GM12878 (cell line): ENCODE measurements at regions of chr5 and their contacts with region 1.

Region 1: DNA sequence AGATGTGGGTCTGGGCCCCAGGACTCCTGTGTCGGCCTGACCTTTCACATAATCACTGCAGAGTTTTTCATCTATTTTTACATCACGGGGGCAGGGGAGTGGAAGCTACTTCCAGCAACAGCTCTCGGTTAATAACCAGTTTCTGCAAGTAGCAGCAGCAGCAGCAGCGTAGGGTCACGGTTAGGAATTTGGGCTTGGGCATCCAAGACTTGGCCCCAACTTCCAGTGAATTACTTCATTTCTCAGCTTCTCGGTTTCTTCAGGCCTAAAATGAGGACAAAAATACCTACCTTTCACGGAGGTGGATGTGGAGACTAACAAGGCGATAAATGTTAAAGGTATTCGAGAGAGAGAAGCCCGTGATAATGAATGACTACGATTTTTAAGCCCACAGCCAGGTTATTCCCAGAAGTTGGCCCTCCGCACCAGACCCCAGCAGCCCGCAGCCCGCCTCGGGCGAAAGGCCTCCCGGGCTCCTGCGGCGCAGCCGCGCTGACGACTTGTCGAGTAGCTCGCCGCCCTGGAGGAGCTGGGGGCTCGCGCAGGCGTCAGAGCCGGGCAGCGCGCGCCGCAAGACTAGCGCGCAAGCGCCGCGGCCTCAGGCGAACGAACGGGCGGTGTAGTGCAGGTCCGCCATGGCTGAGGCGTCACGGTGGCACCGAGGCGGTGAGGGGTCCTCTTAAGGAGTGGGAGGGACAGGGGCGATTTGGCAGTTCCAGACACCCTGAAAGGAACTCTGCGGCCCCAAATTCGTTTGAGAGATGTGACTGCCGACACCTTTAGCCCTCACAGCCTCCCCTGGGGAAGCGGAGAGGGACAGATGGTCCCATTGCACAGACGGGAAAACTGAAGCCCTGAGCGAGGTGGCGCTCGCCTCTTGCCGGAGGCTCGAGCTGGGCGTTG is at the start of gene PKD2L2:
- DNase-seq: peak; percentile 75
- ATAC-seq: peak; percentile 99
- H3K4me3 ChIP-seq: peak within 1 kb of the TSS; percentile 79
- H3K27ac ChIP-seq: peak within 1 kb of the TSS; percentile 84
- H3K4me1 ChIP-seq: no peaks in the 10 kb centered on the region
- H3K27me3 ChIP-seq: no peaks in the 10 kb centered on the region
- CTCF ChIP-seq: peak in 2 of 3 experiments; percentile 7 to 12; a peak in 1 of 6 replicates
- EP300 ChIP-seq: 0 out of 4 replicates have a peak, but pooled peaks of 1 of the 2 experiments have one; percentile 26
- POLR2A ChIP-seq: peak; percentile 99
- RAD21 ChIP-seq: no peak
- polyA plus RNA-seq, gene PKD2L2: 0.11 to 0.16 TPM

Region 2: GRCh38 chr5:137442660-137443059 is 446.4 kb before region 1 on chr5:
- CTCF ChIA-PET with region 1: no interaction called
- POLR2A ChIA-PET with region 1: no interaction called
- RAD21 ChIA-PET with region 1: no interaction called
- SMC1A ChIA-PET with region 1: no interaction called
- in situ Hi-C with region 1: no loop called
- intact Hi-C with region 1: no loop called
- DNase-seq: no peak
- ATAC-seq: no peak
- H3K4me3 ChIP-seq: no peak overlapping the region
- H3K27ac ChIP-seq: no peak overlapping the region
- H3K4me1 ChIP-seq: no peaks in the 10 kb centered on the region
- H3K27me3 ChIP-seq: no peaks in the 10 kb centered on the region
- CTCF ChIP-seq: no peak
- EP300 ChIP-seq: no peak
- POLR2A ChIP-seq: no peak
- RAD21 ChIP-seq: no peak

Region 3: DNA sequence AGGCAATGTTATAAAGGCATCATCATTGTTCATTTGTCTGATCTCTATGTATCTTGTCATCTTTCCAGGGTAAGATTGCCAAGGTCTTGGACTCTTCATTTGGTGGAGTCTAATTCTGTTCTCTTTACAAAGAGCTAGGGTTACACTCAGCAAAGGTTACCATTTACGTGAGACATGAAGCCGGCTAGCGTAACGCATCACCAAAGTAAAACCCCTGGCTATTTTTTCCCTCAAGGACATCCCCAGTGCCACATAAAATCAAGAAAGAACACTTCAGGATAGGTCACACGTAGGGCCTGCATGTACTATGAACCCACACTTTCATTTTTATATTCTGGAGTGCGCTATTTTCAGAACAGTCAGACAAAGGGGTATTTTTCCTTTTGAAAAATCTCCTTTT is 41.4 kb before region 1 on chr5:
- CTCF ChIA-PET with region 1: interaction called, 26 read pairs
- POLR2A ChIA-PET with region 1: interaction called, 26 read pairs
- RAD21 ChIA-PET with region 1: interaction called, 19 read pairs
- SMC1A ChIA-PET with region 1: interaction called, 19 read pairs
- in situ Hi-C with region 1: no loop called
- intact Hi-C with region 1: no loop called
- DNase-seq: peak; percentile 33
- ATAC-seq: peak; percentile 90
- H3K4me3 ChIP-seq: peak overlapping the region; percentile 63; the same call in 1 of the 2 replicates
- H3K27ac ChIP-seq: peak overlapping the region; percentile 45
- H3K4me1 ChIP-seq: peaks cover 13% of the 10 kb centered on the region
- H3K27me3 ChIP-seq: no peaks in the 10 kb centered on the region
- CTCF ChIP-seq: no peak
- EP300 ChIP-seq: peak; percentile 11 to 48; a peak in 1 of 4 replicates
- POLR2A ChIP-seq: no peak
- RAD21 ChIP-seq: no peak

Region 4: GRCh38 chr5:137872466-137872865 is 16.6 kb before region 1 on chr5:
- CTCF ChIA-PET with region 1: interaction called, 7 read pairs
- POLR2A ChIA-PET with region 1: interaction called, 6 read pairs
- RAD21 ChIA-PET with region 1: interaction called, 8 read pairs
- SMC1A ChIA-PET with region 1: interaction called, 13 read pairs
- in situ Hi-C with region 1: no loop called
- intact Hi-C with region 1: no loop called
- DNase-seq: no peak
- ATAC-seq: no peak
- H3K4me3 ChIP-seq: no peak overlapping the region
- H3K27ac ChIP-seq: no peak overlapping the region
- H3K4me1 ChIP-seq: peaks cover 4% of the 10 kb centered on the region; the same call in 1 of the 2 replicates
- H3K27me3 ChIP-seq: no peaks in the 10 kb centered on the region
- CTCF ChIP-seq: no peak
- EP300 ChIP-seq: no peak
- POLR2A ChIP-seq: no peak
- RAD21 ChIP-seq: no peak

Region 5: DNA sequence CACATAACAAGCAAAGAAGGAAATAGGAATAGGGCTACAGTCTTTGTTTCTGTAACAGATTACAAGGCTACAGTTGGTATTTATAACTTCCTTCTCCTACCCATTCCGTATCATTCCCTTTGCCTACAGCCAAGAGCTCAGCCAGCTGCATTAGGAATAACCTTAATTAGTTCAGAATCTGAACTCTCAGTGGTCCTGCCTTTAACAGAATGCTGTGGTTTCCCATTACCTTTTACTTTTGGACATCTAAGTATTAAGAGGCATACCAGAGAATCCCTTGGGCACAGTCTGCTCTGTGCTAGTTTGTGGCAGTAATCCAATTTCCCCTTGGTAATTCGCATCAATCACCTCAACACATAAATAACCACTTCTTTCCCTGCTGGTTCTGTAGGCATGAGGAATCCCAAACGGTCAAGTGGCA is 44.4 kb after region 1 on chr5:
- CTCF ChIA-PET with region 1: interaction called, 7 read pairs
- POLR2A ChIA-PET with region 1: interaction called, 3 read pairs
- RAD21 ChIA-PET with region 1: interaction called, 21 read pairs
- SMC1A ChIA-PET with region 1: interaction called, 22 read pairs
- in situ Hi-C with region 1: no loop called
- intact Hi-C with region 1: no loop called
- DNase-seq: no peak
- ATAC-seq: no peak
- H3K4me3 ChIP-seq: no peak overlapping the region
- H3K27ac ChIP-seq: no peak overlapping the region
- H3K4me1 ChIP-seq: peaks cover 14% of the 10 kb centered on the region
- H3K27me3 ChIP-seq: no peaks in the 10 kb centered on the region
- CTCF ChIP-seq: no peak
- EP300 ChIP-seq: no peak
- POLR2A ChIP-seq: no peak
- RAD21 ChIP-seq: no peak

Region 6: GRCh38 chr5:138065102-138065501 is 176.0 kb after region 1 on chr5:
- CTCF ChIA-PET with region 1: interaction called, 13 read pairs
- POLR2A ChIA-PET with region 1: no interaction called
- RAD21 ChIA-PET with region 1: no interaction called
- SMC1A ChIA-PET with region 1: interaction called, 6 read pairs
- in situ Hi-C with region 1: no loop called
- intact Hi-C with region 1: no loop called
- DNase-seq: no peak
- ATAC-seq: peak; percentile 66
- H3K4me3 ChIP-seq: no peak overlapping the region
- H3K27ac ChIP-seq: no peak overlapping the region
- H3K4me1 ChIP-seq: no peaks in the 10 kb centered on the region
- H3K27me3 ChIP-seq: no peaks in the 10 kb centered on the region
- CTCF ChIP-seq: peak; percentile 45 to 66 (median 45); a peak in 5 of 6 replicates
- EP300 ChIP-seq: no peak
- POLR2A ChIP-seq: no peak
- RAD21 ChIP-seq: peak; percentile 33; the same call in 1 of the 2 replicates

Region 7: DNA sequence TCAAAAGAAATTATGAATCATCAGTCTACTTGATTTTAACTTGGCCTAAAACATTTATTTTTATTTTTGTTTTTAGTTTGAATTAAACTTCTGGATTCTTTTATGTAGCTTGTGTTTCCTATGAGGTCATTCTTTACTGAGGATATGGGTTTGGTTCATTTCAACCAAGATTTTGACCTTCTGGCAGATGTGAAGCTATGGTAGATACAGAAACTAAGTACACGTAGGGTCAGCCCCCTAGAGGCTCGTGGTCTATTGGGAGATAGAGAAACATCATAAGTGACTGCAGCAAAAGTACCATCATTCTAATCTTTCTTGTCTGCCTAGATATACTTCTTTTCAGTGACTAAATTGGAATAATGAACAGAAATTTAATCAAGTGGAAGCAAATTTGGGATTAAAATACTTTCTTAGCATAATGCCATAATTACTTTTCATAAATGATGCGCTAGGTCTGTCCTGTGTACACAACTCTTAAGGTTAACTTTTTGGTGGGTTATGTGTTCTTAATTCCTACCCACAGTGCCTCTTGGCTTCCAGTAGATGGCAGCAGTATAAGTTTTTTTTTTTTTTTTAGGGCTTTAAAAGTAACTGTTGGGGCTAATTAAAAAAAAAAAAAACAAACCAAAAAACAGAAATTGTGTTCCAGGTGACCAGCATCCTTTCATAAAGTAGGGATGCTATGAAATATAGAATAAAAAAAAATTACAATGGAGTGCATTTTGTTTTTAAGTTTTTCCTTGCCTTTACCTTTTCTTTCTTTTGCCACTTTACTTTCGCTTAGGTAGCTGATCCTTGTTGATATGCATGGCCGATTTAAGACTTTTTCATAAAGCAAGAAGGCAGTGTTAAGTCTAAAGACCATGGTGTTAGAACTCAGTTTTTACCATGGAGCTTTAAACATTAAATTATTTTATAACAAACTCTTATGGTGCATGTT is 936.1 kb after region 1 on chr5:
- CTCF ChIA-PET with region 1: no interaction called
- POLR2A ChIA-PET with region 1: no interaction called
- RAD21 ChIA-PET with region 1: no interaction called
- SMC1A ChIA-PET with region 1: no interaction called
- in situ Hi-C with region 1: no loop called
- intact Hi-C with region 1: no loop called
- DNase-seq: no peak
- ATAC-seq: peak; percentile 77
- H3K4me3 ChIP-seq: no peak overlapping the region
- H3K27ac ChIP-seq: no peak overlapping the region
- H3K4me1 ChIP-seq: no peaks in the 10 kb centered on the region
- H3K27me3 ChIP-seq: no peaks in the 10 kb centered on the region
- CTCF ChIP-seq: peak; percentile 53 to 59 (median 59)
- EP300 ChIP-seq: no peak
- POLR2A ChIP-seq: no peak
- RAD21 ChIP-seq: peak; percentile 51